Cardiac septum (tissue), 1 donor: ENCODE measurements at regions of chr17 and their contacts with region 1.

Region 1: DNA sequence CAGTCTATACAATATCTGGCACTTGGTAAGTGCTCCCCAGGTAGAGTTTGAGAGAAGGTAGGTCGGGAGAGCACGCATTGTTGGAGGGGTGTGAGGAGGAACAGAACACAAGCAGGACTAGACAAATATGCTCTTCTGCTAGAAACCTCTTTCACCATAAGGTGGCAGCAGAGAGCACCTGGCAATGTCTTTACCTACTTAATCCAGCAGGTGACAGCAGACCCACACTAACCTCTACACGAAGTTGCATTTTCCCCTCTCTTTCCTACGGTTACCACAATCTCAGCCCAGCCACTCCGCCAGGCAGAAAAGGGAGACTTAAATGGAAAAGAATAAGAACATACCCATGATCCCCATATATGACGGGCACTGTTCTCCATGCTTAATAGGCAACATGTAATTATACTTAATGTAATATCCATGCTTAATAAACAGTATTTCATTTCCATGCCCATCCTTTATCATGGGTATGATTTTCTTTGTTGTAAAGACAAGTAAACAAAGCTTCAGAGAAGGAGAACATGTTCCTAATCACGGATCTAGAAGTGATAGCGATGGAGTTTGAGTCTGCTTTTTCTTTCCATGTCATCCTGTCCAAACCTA is 55.1 kb upstream of the CCL2 start:
- DNase-seq: peak; percentile 81

Region 2: GRCh38 chr17:34241062-34241461 is 41.0 kb after region 1 on chr17:
- intact Hi-C with region 1: loop called (anchors 5 kb)
- DNase-seq: peak; percentile 82

Region 3: GRCh38 chr17:34306466-34306865 is 106.4 kb after region 1 on chr17:
- intact Hi-C with region 1: loop called (anchors 1 kb)
- DNase-seq: no peak

Region 4: GRCh38 chr17:34361478-34362061 is 161.5 kb after region 1 on chr17:
- intact Hi-C with region 1: loop called (anchors 1 kb)
- DNase-seq: peak; percentile 93